ENCODE measurements at regions of chr6 and their contacts with region 1.

Region 1: GRCh38 chr6:28838634-28839442 is 84.9 kb downstream of the TRIM27 start:
- DNase-seq: peak; percentile 80
- H3K4me3 ChIP-seq: peak overlapping the region; percentile 73 to 100 (median 78)
- H3K27ac ChIP-seq: no peak overlapping the region
- H3K4me1 ChIP-seq: no peaks in the 10 kb centered on the region
- H3K27me3 ChIP-seq: no peaks in the 10 kb centered on the region
- CTCF ChIP-seq: peak; percentile 37 to 81

Region 2: DNA sequence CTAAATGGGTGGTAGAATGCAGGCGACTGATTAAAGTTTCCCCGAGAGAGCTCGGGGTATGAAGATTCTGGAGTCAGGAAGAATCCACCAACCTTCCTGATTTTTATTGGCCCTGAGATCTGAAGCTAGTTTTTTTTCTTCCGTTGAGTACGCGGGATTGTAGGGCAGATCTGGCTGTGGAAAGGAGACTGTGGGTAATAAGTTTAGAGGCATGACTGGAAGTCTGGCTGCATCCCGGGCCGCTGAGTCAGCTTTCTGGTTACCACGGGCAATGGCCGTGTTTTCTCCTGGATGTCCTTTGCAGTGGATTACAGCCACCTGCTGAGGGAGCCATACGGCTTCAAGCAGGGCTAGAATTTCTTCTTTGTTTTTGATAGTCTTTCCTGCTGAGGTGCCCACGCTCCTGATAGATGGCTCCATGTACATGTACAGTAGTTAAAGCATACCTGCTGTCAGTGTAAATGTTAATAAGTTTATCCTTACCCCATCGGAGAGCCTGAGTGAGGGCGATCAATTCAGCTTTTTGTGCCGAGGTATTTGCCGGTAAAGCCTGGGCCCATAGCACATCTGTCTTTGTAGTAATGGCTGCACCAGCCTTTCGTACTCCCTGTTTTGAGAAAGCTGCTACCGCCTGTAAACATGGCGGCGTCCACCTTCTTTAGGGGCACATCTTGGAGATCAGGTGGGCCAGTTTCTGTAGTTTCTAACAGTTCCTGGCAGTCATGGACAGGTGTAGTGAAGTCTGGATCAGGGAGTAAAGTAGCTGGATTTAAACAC is 69.0 kb before region 1 on chr6:
- CTCF ChIA-PET with region 1: interaction called, 3 read pairs
- dilution Hi-C with region 1: no loop called
- in situ Hi-C with region 1: no loop called
- intact Hi-C with region 1: loop called (anchors 1 kb)
- DNase-seq: peak; percentile 72
- H3K4me3 ChIP-seq: no peak overlapping the region
- H3K27ac ChIP-seq: no peak overlapping the region
- H3K4me1 ChIP-seq: no peaks in the 10 kb centered on the region
- H3K27me3 ChIP-seq: peaks cover 60% of the 10 kb centered on the region
- CTCF ChIP-seq: peak; percentile 31 to 60

Region 3: DNA sequence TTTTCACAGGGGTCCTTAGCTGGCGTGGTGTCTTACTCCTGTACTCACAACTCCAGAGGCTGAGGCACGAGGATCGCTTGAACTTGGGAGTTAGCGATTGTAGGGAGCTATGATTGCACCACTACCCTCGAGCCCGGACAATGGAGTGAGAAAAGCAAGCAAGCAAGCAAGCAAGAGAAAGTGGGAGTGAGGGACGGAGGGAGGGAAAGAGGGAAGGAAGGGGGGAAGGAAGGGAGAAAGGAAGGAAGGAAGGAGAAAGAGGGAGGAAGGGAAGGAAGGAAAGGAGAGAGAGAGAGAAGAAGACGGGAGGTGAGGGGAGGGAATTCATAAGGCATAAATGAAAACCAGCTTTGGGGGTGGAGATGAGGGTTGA is 35.5 kb before region 1 on chr6:
- CTCF ChIA-PET with region 1: no interaction called
- dilution Hi-C with region 1: no loop called
- in situ Hi-C with region 1: no loop called
- intact Hi-C with region 1: no loop called
- DNase-seq: no peak
- H3K4me3 ChIP-seq: peak overlapping the region; percentile 20 to 44 (median 25)
- H3K27ac ChIP-seq: no peak overlapping the region
- H3K4me1 ChIP-seq: peaks cover 4% of the 10 kb centered on the region
- H3K27me3 ChIP-seq: no peaks in the 10 kb centered on the region
- CTCF ChIP-seq: no peak

Region 4: DNA sequence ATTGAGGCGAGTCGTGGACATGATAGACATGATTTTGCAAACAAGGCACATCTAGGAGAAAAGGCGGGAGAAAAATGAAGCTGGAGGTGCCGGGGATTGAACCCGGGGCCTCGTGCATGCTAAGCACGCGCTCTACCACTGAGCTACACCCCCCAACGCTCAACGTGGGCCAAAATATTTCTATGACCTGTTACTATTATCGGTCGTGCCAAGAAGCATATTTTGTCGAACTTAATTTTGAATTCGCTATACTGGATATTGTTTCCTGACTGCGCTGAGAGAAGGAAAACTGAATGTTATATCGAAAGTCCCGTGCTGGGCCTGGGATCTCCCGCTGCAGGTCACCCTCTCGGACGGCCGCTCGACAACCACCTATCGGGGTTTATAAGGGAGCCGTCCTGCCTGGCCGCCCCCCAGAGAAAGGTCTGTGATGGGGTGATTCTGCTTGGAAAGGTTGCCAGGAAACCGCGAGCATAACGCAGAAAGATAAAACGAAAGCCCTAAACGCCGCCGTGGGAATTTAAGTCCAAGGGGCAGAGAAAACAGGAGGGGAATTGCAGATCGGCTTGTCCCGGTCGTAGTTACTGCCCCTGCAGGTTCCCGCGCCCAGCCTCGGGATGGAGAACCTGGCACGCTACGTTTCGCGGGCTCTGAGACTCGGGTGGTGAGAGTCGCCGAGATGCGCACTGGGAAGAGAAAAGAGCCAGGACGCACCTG is 24.9 kb after region 1 on chr6:
- CTCF ChIA-PET with region 1: no interaction called
- dilution Hi-C with region 1: no loop called
- in situ Hi-C with region 1: no loop called
- intact Hi-C with region 1: loop called (anchors 1 kb)
- DNase-seq: peak; percentile 76
- H3K4me3 ChIP-seq: peak overlapping the region; percentile 57 to 85 (median 69)
- H3K27ac ChIP-seq: peak overlapping the region; percentile 50
- H3K4me1 ChIP-seq: peaks cover 12% of the 10 kb centered on the region
- H3K27me3 ChIP-seq: no peaks in the 10 kb centered on the region
- CTCF ChIP-seq: no peak

Region 5: GRCh38 chr6:28923318-28924102 is 84.7 kb after region 1 on chr6 and contains the start of gene TRIM27:
- CTCF ChIA-PET with region 1: interaction called, 3 read pairs
- dilution Hi-C with region 1: no loop called
- in situ Hi-C with region 1: no loop called
- intact Hi-C with region 1: loop called (anchors 1 kb)
- DNase-seq: peak; percentile 81
- H3K4me3 ChIP-seq: peak within 1 kb of the TSS; percentile 67 to 88 (median 73)
- H3K27ac ChIP-seq: peak within 1 kb of the TSS; percentile 82
- H3K4me1 ChIP-seq: peaks cover 19% of the 10 kb centered on the region
- H3K27me3 ChIP-seq: no peaks in the 10 kb centered on the region
- CTCF ChIP-seq: peak in 1 of 2 donors; percentile 2
- total RNA-seq, gene TRIM27: 45.3 to 49.2 TPM

Region 6: GRCh38 chr6:29016559-29017427 is 178.0 kb after region 1 on chr6:
- CTCF ChIA-PET with region 1: interaction called, 5 read pairs
- dilution Hi-C with region 1: no loop called
- in situ Hi-C with region 1: loop called (anchors 5 to 10 kb)
- intact Hi-C with region 1: loop called (anchors 1 kb)
- DNase-seq: peak; percentile 66
- H3K4me3 ChIP-seq: peak overlapping the region; percentile 53 to 57 (median 54)
- H3K27ac ChIP-seq: no peak overlapping the region
- H3K4me1 ChIP-seq: peaks cover 9% of the 10 kb centered on the region
- H3K27me3 ChIP-seq: no peaks in the 10 kb centered on the region
- CTCF ChIP-seq: peak; percentile 84 to 93

Measured in mammary epithelial cell (primary cell).